ENCODE measurements at regions of chr5 and their contacts with region 1.

Region 1: GRCh38 chr5:132007399-132008165 is 3.9 kb downstream of the ACSL6 start:
- DNase-seq: peak; percentile 54 to 81 (median 65)
- H3K4me3 ChIP-seq: no peak overlapping the region
- H3K4me3 Mint-ChIP-seq: no peak overlapping the region
- H3K27ac ChIP-seq: no peak overlapping the region
- H3K27ac Mint-ChIP-seq: peak overlapping the region in 1 of 7 donors; percentile 21
- H3K4me1 ChIP-seq: peaks cover 6 to 11% of the 10 kb centered on the region in 2 donors
- H3K4me1 Mint-ChIP-seq: peaks cover 9% of the 10 kb centered on the region
- H3K27me3 ChIP-seq: peaks cover 35 to 42% of the 10 kb centered on the region in 2 donors
- H3K27me3 Mint-ChIP-seq: peaks cover 28 to 42% (median 36%) of the 10 kb centered on the region in 3 donors
- CTCF ChIP-seq: peak; percentile 79

Region 2: DNA sequence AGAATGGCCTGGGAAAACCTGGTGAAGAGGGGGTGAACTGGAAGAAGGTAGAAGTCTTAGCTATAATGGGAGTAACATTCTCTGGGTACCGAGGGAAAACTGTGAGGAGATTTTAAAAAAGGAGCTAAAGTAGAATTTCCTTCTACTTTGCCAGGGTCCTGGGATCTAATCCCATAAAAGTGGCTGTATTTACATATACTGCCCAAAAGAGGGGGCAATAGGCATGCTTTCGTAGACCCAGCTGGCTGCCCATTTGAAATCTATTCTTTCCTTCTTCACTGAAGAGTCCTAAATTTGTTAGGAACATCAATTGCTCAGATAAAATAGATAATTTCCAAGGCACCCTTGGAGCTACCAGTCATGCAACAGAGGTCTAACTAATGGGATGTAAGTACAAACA is 584.5 kb before region 1 on chr5:
- intact Hi-C with region 1: loop called in 1 of 2 experiments (anchors 10 kb)
- DNase-seq: peak in 1 of 3 donors; percentile 9
- H3K4me3 ChIP-seq: no peak overlapping the region
- H3K4me3 Mint-ChIP-seq: no peak overlapping the region
- H3K27ac ChIP-seq: no peak overlapping the region
- H3K27ac Mint-ChIP-seq: peak overlapping the region in 2 of 7 donors; percentile 26 to 71
- H3K4me1 ChIP-seq: no peaks in the 10 kb centered on the region
- H3K4me1 Mint-ChIP-seq: no peaks in the 10 kb centered on the region
- H3K27me3 ChIP-seq: no peaks in the 10 kb centered on the region
- H3K27me3 Mint-ChIP-seq: no peaks in the 10 kb centered on the region
- CTCF ChIP-seq: peak; percentile 57

Region 3: DNA sequence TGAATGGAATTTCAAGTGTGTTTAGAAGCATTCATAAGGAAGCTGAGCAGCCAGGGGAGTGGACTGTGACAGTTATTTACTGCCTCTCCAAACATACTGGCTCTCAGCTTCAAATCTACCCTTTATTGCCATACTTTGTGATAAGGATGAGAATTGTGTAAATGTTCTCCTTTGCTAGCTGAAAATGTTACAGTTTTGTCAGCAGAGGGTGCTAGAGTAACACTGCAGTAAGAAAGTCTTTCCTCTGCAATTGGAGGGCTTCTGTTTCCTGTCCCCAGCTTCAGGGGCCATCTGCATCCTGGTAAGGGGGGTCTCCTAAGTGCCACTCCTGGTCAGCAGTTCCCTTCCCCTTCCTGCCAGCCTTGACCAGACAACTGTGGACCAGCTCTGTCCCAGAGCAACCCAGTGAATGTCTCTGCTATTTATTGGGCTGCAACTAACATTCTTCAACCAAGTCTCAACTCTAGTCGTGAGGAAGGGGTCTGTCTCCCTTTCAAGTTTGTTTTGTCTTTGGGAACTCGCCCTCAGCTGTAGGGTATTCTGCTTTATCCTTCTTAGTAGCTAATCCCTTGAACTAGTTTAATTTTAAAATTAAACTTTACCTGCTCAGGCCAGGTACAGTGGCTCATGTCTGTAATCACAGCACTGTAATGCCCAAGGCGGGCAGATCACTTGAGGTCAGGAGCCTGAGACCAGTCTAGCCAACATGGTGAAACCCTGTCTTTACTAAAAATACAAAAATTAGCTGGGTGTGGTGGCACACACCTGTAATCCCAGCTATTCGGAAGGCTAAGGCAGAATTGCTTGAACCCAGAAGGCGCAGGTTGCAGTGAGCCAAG is 417.9 kb before region 1 on chr5:
- intact Hi-C with region 1: loop called (anchors 2 kb)
- DNase-seq: peak; percentile 13 to 46 (median 33)
- H3K4me3 ChIP-seq: no peak overlapping the region
- H3K4me3 Mint-ChIP-seq: no peak overlapping the region
- H3K27ac ChIP-seq: no peak overlapping the region
- H3K27ac Mint-ChIP-seq: peak overlapping the region in 2 of 7 donors; percentile 41 to 65
- H3K4me1 ChIP-seq: peaks cover 0 to 3% of the 10 kb centered on the region in 2 donors
- H3K4me1 Mint-ChIP-seq: peaks cover 9% of the 10 kb centered on the region
- H3K27me3 ChIP-seq: no peaks in the 10 kb centered on the region
- H3K27me3 Mint-ChIP-seq: no peaks in the 10 kb centered on the region
- CTCF ChIP-seq: peak; percentile 87

Region 4: GRCh38 chr5:131810510-131811249 is 196.9 kb before region 1 on chr5:
- intact Hi-C with region 1: loop called in 1 of 2 experiments (anchors 10 kb)
- DNase-seq: no peak
- H3K4me3 ChIP-seq: no peak overlapping the region
- H3K4me3 Mint-ChIP-seq: no peak overlapping the region
- H3K27ac ChIP-seq: no peak overlapping the region
- H3K27ac Mint-ChIP-seq: peak overlapping the region in 1 of 7 donors; percentile 24
- H3K4me1 ChIP-seq: no peaks in the 10 kb centered on the region
- H3K4me1 Mint-ChIP-seq: peaks cover 4% of the 10 kb centered on the region
- H3K27me3 ChIP-seq: no peaks in the 10 kb centered on the region
- H3K27me3 Mint-ChIP-seq: peaks cover 0 to 2% (median 0%) of the 10 kb centered on the region in 3 donors
- CTCF ChIP-seq: peak; percentile 16